Activated CD4-positive, alpha-beta memory T cell treated with anti-CD3 and anti-CD28 coated beads, Interleukin-2, amount 10 ng/mL, durations not matched to agents 7 days and 5 days (primary cell): ENCODE measurements at regions of chr11 and their contacts with region 1.

Region 1: GRCh38 chr11:64778508-64779346 is at the start of gene SF1:
- DNase-seq: peak; percentile 100
- H3K4me3 Mint-ChIP-seq: peak within 1 kb of the TSS; percentile 86
- H3K27ac Mint-ChIP-seq: peak within 1 kb of the TSS; percentile 100
- H3K4me1 Mint-ChIP-seq: peaks cover 57% of the 10 kb centered on the region
- H3K27me3 Mint-ChIP-seq: no peaks in the 10 kb centered on the region
- total RNA-seq, gene SF1: 385 to 390 TPM

Region 2: DNA sequence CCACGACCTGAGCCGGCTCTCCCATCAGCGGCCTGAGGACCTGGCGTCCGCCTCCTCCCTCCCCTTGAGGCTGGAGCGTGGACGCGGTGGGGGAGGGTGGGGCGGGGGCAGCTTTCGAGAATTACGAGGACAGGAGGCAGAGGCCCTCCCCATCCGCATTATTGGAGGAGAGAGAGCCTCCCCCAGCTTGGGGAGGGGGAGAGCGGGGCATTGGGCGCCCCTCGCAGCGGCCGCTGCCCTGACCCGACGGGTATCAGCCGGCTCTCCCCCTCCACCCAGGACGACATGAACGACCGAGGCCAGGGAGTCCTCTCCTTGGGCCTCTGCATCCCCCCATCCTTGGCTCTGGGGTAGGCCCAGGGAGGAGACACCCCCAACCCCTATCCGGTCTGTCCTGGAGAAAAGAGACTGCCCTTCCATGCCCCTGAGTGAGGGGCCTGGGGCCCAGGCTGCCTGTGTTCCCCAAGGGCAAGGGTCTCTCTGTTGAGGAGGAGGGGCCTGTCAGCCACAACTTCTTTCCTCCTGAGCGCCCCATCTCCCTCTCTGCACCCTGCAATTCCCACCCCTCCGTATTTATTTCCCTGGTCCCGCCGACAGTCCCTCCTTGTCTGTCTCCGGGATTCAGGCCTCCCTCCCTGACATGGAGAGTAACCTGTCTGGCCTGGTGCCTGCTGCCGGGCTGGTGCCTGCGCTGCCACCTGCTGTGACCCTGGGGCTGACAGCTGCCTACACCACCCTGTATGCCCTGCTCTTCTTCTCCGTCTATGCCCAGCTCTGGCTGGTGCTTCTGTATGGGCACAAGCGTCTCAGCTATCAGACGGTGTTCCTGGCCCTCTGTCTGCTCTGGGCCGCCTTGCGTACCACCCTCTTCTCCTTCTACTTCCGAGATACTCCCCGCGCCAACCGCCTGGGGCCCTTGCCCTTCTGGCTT is 492.6 kb before region 1 on chr11:
- CTCF ChIA-PET with region 1: no interaction called
- POLR2A ChIA-PET with region 1: no interaction called
- DNase-seq: peak; percentile 53
- H3K4me3 Mint-ChIP-seq: peak overlapping the region; percentile 79
- H3K27ac Mint-ChIP-seq: peak overlapping the region; percentile 70
- H3K4me1 Mint-ChIP-seq: peaks cover 32% of the 10 kb centered on the region
- H3K27me3 Mint-ChIP-seq: peaks cover 11% of the 10 kb centered on the region

Region 3: GRCh38 chr11:64767344-64768299 is 11.1 kb before region 1 on chr11:
- CTCF ChIA-PET with region 1: interaction called, 27 read pairs
- POLR2A ChIA-PET with region 1: interaction called, 151 read pairs
- DNase-seq: peak; percentile 83
- H3K4me3 Mint-ChIP-seq: no peak overlapping the region
- H3K27ac Mint-ChIP-seq: peak overlapping the region; percentile 85
- H3K4me1 Mint-ChIP-seq: peaks cover 90% of the 10 kb centered on the region
- H3K27me3 Mint-ChIP-seq: no peaks in the 10 kb centered on the region

Region 4: GRCh38 chr11:64803163-64803845 is 24.6 kb after region 1 on chr11 and contains the start of gene MAP4K2:
- CTCF ChIA-PET with region 1: interaction called, 4 read pairs
- POLR2A ChIA-PET with region 1: interaction called, 16 read pairs
- DNase-seq: peak; percentile 91
- H3K4me3 Mint-ChIP-seq: peak within 1 kb of the TSS; percentile 85
- H3K27ac Mint-ChIP-seq: peak within 1 kb of the TSS; percentile 86
- H3K4me1 Mint-ChIP-seq: peaks cover 39% of the 10 kb centered on the region
- H3K27me3 Mint-ChIP-seq: no peaks in the 10 kb centered on the region
- total RNA-seq, gene MAP4K2: 95.6 to 98.0 TPM

Region 5: GRCh38 chr11:64810271-64810890 is 31.7 kb after region 1 on chr11 and contains the start of gene MEN1:
- CTCF ChIA-PET with region 1: interaction called, 3 read pairs
- POLR2A ChIA-PET with region 1: interaction called, 13 read pairs
- DNase-seq: peak; percentile 85
- H3K4me3 Mint-ChIP-seq: peak within 1 kb of the TSS; percentile 97
- H3K27ac Mint-ChIP-seq: peak within 1 kb of the TSS; percentile 72
- H3K4me1 Mint-ChIP-seq: peaks cover 25% of the 10 kb centered on the region
- H3K27me3 Mint-ChIP-seq: peaks cover 4% of the 10 kb centered on the region
- total RNA-seq, gene MEN1: 32.5 to 33.4 TPM

Region 6: DNA sequence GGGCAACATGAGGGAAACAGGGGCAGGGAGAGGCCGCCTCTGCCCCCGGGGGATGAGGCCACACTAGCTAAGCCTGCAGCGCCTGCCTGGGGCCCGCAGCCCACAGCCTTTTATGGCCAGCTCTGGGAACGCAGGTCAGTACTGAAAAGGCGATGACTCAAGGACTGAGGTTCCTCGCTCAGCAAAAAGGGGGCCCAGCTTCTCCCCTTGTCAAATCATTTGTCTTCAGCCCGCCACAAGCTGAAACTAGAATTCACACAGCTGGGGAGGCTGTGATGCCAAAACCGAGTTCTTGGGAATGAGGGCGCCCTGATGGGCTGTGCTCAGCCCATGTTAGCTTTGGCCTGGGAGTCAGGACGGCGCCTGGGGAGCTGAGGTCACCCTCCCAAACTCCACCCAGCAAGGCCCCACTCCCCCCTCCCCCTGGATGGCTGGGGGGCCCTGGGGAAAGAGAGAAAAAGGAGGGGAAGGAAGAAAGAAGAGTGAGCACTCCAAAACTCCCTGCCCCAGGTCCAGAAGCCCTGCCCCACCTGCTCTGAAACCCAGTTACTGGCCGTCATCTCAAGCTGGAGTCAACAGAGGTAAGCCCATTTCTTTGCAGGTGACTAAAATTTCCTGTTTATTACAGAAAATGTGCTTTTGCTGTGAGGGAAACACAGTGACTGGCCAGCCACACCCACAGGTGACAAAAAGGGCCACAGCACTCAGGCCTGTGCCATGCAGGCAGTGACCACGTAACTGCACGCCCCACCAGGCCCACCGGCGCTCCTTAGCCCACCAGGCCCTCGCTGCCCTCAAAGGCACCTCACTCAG is 86.0 kb after region 1 on chr11:
- CTCF ChIA-PET with region 1: no interaction called
- POLR2A ChIA-PET with region 1: interaction called, 11 read pairs
- DNase-seq: no peak
- H3K4me3 Mint-ChIP-seq: peak overlapping the region; percentile 68
- H3K27ac Mint-ChIP-seq: peak overlapping the region; percentile 98
- H3K4me1 Mint-ChIP-seq: peaks cover 92% of the 10 kb centered on the region
- H3K27me3 Mint-ChIP-seq: no peaks in the 10 kb centered on the region